ENCODE measurements at regions of chr17 and their contacts with region 1.

Region 1: GRCh38 chr17:44344939-44345453 is at the start of gene GRN:
- DNase-seq: peak; percentile 67 to 91 (median 83)
- ATAC-seq: peak; percentile 99
- H3K4me3 ChIP-seq: peak within 1 kb of the TSS; percentile 63 to 91
- H3K4me3 Mint-ChIP-seq: peak within 1 kb of the TSS; percentile 93
- H3K27ac ChIP-seq: peak within 1 kb of the TSS in 1 of 2 experiments; percentile 61
- H3K27ac Mint-ChIP-seq: peak within 1 kb of the TSS; percentile 70
- H3K4me1 ChIP-seq: peaks cover 12% of the 10 kb centered on the region
- H3K4me1 Mint-ChIP-seq: peaks cover 20% of the 10 kb centered on the region
- H3K27me3 ChIP-seq: no peaks in the 10 kb centered on the region
- H3K27me3 Mint-ChIP-seq: peaks cover 14% of the 10 kb centered on the region
- CTCF ChIP-seq: no peak
- total RNA-seq, gene GRN: 8.5 to 13.2 TPM

Region 2: DNA sequence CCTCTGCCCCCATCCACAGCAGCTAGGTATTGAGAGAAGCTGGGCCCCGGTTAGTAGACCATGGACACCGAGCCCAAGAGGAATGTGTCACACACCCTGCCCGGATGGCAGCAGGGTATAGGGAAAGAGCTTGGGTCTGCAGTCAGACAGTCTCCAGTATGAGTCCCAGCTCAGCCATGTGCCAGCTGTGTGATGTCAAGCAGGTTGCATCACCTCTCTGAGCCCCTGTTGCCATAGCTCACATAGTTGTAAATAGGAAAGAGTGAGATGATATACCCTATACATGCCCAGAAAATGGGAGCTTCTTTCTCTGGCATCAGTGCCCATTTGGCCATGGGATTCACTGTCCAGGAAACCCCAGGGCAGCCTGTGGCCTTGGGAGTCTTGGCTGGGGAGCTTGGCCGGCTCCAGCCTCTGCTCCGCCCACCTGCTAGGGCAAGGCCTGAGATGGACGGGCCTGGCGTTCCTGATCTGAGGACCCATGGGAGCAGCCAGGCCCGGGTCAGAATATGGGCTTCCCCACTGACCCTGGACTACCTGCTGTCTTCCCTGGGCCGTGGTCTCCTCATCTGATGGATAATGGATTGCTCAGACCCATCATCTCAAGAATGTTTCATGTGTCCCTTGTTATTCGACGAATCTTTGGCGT is 484.8 kb before region 1 on chr17:
- CTCF ChIA-PET with region 1: no interaction called
- POLR2A ChIA-PET with region 1: no interaction called
- intact Hi-C with region 1: no loop called
- DNase-seq: no peak
- ATAC-seq: no peak
- H3K4me3 ChIP-seq: no peak overlapping the region
- H3K4me3 Mint-ChIP-seq: no peak overlapping the region
- H3K27ac ChIP-seq: no peak overlapping the region
- H3K27ac Mint-ChIP-seq: no peak overlapping the region
- H3K4me1 ChIP-seq: no peaks in the 10 kb centered on the region
- H3K4me1 Mint-ChIP-seq: no peaks in the 10 kb centered on the region
- H3K27me3 ChIP-seq: no peaks in the 10 kb centered on the region
- H3K27me3 Mint-ChIP-seq: peaks cover 8% of the 10 kb centered on the region
- CTCF ChIP-seq: no peak

Region 3: DNA sequence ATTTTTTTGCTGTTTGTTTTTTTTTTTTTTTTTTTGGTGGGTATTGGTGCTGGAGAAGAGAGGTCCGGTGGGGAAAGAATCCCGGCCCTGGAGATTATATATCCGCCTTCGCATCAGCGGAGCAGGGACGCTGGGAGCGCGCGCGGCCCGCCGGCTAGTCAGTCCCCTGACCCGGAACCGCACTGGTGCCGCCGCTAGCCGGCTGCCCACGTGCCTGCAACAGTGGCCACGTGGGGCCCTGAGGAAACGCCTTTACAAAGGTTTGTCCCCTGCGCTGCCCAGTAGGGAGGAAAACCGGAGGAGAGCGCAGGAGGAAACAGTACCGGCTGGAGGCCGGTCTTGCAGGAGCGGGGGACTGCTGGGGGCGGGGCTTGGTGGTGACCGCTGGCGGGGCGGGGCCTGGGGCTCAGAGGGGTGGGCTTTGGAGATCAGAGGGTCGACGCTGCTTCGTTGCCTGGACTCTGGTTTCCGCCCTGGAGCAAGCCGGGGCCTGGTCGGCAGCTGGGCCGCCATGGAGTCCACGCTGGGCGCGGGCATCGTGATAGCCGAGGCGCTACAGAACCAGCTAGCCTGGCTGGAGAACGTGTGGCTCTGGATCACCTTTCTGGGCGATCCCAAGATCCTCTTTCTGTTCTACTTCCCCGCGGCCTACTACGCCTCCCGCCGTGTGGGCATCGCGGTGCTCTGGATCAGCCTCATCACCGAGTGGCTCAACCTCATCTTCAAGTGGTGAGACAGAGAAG is 274.4 kb before region 1 on chr17 and contains the start of gene G6PC3:
- CTCF ChIA-PET with region 1: no interaction called
- POLR2A ChIA-PET with region 1: no interaction called
- intact Hi-C with region 1: loop called in 1 of 2 experiments (anchors 10 kb)
- DNase-seq: peak; percentile 30 to 88 (median 75)
- ATAC-seq: peak; percentile 55
- H3K4me3 ChIP-seq: peak within 1 kb of the TSS; percentile 70 to 84
- H3K4me3 Mint-ChIP-seq: peak within 1 kb of the TSS; percentile 96
- H3K27ac ChIP-seq: peak within 1 kb of the TSS; percentile 62 to 80
- H3K27ac Mint-ChIP-seq: peak within 1 kb of the TSS; percentile 94
- H3K4me1 ChIP-seq: peaks cover 23% of the 10 kb centered on the region
- H3K4me1 Mint-ChIP-seq: peaks cover 34% of the 10 kb centered on the region
- H3K27me3 ChIP-seq: no peaks in the 10 kb centered on the region
- H3K27me3 Mint-ChIP-seq: no peaks in the 10 kb centered on the region
- CTCF ChIP-seq: no peak
- total RNA-seq, gene G6PC3: 4.8 to 5.9 TPM

Region 4: GRCh38 chr17:44199553-44200477 is 145.2 kb before region 1 on chr17 and contains the start of gene ATXN7L3:
- CTCF ChIA-PET with region 1: interaction called, 19 read pairs
- POLR2A ChIA-PET with region 1: interaction called, 8 read pairs
- intact Hi-C with region 1: no loop called
- DNase-seq: peak; percentile 99 to 100 (median 99)
- ATAC-seq: peak; percentile 84
- H3K4me3 ChIP-seq: peak within 1 kb of the TSS; percentile 84 to 96
- H3K4me3 Mint-ChIP-seq: peak within 1 kb of the TSS; percentile 86
- H3K27ac ChIP-seq: peak within 1 kb of the TSS; percentile 69 to 92
- H3K27ac Mint-ChIP-seq: peak within 1 kb of the TSS; percentile 93
- H3K4me1 ChIP-seq: peaks cover 36% of the 10 kb centered on the region
- H3K4me1 Mint-ChIP-seq: peaks cover 43% of the 10 kb centered on the region
- H3K27me3 ChIP-seq: no peaks in the 10 kb centered on the region
- H3K27me3 Mint-ChIP-seq: no peaks in the 10 kb centered on the region
- CTCF ChIP-seq: no peak
- total RNA-seq, gene ATXN7L3: 85.5 to 85.7 TPM

Region 5: DNA sequence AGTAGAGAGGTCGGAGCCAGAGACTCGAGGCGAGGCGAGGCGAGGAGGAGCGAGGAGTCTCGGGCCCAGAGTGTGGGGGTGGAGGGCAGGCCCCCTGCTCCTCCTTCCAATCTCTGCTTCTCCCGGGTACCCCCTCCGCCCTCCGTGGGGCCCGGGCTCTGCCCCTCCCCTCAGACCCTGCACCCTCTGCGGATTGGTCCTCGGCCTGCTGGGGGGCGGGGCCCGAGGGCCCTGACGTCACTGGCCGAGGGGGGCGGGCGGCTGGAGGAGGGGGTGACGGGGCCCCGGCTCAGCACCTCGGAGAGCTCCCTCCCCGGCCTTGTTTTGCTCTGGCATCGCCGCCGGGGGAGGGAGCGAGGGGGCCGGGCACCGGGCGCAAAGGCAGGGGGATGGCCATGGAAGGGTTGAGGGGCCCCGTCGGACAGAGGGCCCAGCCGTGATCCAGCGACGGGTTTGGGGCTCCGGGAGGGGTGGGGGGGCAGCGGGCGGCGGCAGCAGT is 36.6 kb before region 1 on chr17 and contains the start of gene RUNDC3A:
- CTCF ChIA-PET with region 1: no interaction called
- POLR2A ChIA-PET with region 1: no interaction called
- intact Hi-C with region 1: loop called in 1 of 2 experiments (anchors 1 kb)
- DNase-seq: peak; percentile 78 to 92 (median 87)
- ATAC-seq: peak; percentile 94
- H3K4me3 ChIP-seq: peak within 1 kb of the TSS; percentile 33 to 41
- H3K4me3 Mint-ChIP-seq: peak within 1 kb of the TSS; percentile 62
- H3K27ac ChIP-seq: no peak within 1 kb of the TSS
- H3K27ac Mint-ChIP-seq: no peak within 1 kb of the TSS
- H3K4me1 ChIP-seq: peaks cover 14% of the 10 kb centered on the region
- H3K4me1 Mint-ChIP-seq: peaks cover 19% of the 10 kb centered on the region
- H3K27me3 ChIP-seq: peaks cover 4 to 10% of the 10 kb centered on the region in 2 experiments
- H3K27me3 Mint-ChIP-seq: peaks cover 36% of the 10 kb centered on the region
- CTCF ChIP-seq: no peak
- total RNA-seq, gene RUNDC3A: 0.19 TPM in 1 of 2 experiments, not detected in the other

Region 6: DNA sequence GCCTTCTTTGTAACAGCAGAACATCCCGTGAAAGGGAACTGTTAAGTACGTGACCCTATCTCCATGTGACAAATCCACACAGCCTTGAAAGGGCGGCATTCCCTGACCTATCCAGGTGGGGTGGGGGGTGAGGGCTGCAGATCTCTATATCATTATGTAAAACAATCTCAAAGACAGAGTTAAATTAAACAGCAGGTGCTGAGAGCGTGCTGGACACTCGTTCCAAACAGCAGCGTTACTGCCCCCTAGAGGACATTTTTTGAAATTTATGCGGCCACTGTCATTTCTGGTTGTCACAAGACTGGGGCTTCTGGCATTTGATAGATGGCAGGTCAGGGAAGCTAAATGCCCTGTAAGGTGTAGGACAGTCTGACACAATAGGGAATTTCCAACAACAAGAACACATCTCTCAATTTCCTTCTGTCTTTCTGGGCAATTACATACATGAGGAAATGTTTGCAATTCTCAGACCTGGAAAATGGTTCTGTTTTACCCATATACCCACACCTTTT is 13.7 kb before region 1 on chr17:
- CTCF ChIA-PET with region 1: interaction called, 39 read pairs
- POLR2A ChIA-PET with region 1: interaction called, 5 read pairs
- intact Hi-C with region 1: loop called in 1 of 2 experiments (anchors 1 kb)
- DNase-seq: peak; percentile 45 to 85 (median 75)
- ATAC-seq: no peak
- H3K4me3 ChIP-seq: no peak overlapping the region
- H3K4me3 Mint-ChIP-seq: no peak overlapping the region
- H3K27ac ChIP-seq: no peak overlapping the region
- H3K27ac Mint-ChIP-seq: no peak overlapping the region
- H3K4me1 ChIP-seq: peaks cover 4% of the 10 kb centered on the region
- H3K4me1 Mint-ChIP-seq: peaks cover 12% of the 10 kb centered on the region
- H3K27me3 ChIP-seq: no peaks in the 10 kb centered on the region
- H3K27me3 Mint-ChIP-seq: no peaks in the 10 kb centered on the region
- CTCF ChIP-seq: peak; percentile 89

Measured in CD8-positive, alpha-beta T cell (primary cell).